ENCODE measurements at regions of chr12 and their contacts with region 1.

Region 1: DNA sequence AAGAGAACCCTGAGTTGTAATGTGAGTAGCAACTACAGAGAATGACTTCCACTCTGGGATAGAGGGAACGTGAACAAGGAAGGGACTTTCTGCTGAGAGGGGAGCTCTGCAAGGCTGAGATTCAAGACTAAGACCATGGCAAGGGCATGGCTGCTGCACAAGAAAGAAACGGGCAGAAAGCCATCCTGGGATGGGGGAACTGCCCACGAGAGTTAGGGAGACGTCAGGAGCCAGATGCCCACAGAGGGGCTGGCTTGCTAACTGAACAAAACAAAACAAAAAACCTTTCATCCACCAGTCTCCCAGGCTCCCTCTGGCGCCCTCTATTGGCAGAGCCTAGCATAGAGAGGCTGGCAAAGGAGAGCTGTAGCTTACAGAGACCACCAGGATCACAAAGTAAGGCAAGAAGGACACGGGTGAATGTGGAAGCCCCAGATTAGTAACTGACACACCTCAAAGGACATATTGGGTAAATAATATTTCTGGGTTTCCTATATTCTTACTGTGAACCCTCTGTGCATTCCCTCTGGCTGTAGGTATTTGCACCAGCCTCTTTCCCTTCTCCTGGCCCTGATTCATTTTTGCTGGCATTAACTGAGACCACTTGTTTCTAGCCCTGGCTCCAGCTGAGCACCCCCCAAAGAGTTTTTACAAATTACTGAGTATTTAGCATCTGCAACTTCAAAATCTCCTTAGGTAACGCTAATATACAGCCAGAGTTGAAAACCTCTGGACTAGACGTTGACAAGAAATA is 338.3 kb downstream of the EMP1 start:
- DNase-seq: peak; percentile 18
- H3K4me3 Mint-ChIP-seq: no peak overlapping the region
- H3K27ac Mint-ChIP-seq: no peak overlapping the region
- H3K4me1 Mint-ChIP-seq: peaks cover 7% of the 10 kb centered on the region
- H3K27me3 Mint-ChIP-seq: peaks cover 24% of the 10 kb centered on the region

Region 2: DNA sequence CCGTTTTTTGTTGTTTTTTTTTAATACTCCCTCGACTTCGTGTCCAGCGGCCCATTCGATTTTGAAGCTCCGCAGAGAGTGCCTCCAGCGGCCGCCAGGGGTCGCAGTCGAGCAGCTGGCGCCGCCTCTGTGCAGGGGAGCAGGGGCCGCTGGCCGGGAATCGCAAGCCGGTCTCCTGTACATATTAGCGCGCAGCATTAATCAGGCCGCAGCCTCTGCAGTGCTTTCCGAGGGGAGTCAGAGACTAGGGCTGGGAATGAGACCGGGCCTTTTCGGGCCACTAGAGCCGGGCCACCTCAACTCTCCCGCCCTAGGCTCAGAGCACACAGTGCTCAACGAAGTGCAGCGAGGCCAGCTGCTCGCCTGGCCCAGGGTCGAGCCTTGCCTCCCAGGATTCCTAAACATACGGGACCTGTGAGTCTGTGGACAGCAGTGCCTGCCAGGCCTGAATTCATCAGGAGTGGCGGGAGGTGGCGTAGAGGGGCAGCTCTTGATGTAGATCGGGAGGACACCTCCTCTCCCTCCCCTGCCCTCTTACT is 256.5 kb before region 1 on chr12:
- intact Hi-C with region 1: loop called (anchors 2 kb)
- DNase-seq: peak; percentile 34
- H3K4me3 Mint-ChIP-seq: no peak overlapping the region
- H3K27ac Mint-ChIP-seq: no peak overlapping the region
- H3K4me1 Mint-ChIP-seq: peaks cover 3% of the 10 kb centered on the region
- H3K27me3 Mint-ChIP-seq: peaks cover 28% of the 10 kb centered on the region

Region 3: GRCh38 chr12:13347241-13348043 is 187.4 kb before region 1 on chr12:
- intact Hi-C with region 1: loop called (anchors 5 kb)
- DNase-seq: no peak
- H3K4me3 Mint-ChIP-seq: no peak overlapping the region
- H3K27ac Mint-ChIP-seq: no peak overlapping the region
- H3K4me1 Mint-ChIP-seq: peaks cover 13% of the 10 kb centered on the region
- H3K27me3 Mint-ChIP-seq: peaks cover 43% of the 10 kb centered on the region

Region 4: DNA sequence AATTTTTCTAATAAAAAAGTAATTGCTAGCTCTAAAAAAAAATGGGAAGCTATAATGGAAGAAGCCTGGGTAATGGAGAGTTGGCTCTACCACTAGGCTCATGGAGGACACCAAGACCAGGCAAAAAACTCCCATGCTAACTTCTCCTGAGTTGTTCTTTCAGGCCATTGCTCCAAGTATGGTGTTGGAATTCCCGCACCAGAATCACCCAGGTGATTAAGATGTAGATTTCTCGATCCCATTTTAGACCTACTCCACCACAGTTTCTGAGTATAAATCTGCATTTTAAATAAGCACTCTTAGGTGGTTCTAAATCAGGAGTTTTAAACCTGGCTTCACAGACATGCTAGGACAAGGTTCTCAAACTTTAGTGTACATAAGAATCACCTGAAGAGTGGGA is 117.3 kb before region 1 on chr12:
- intact Hi-C with region 1: no loop called
- DNase-seq: no peak
- H3K4me3 Mint-ChIP-seq: no peak overlapping the region
- H3K27ac Mint-ChIP-seq: no peak overlapping the region
- H3K4me1 Mint-ChIP-seq: no peaks in the 10 kb centered on the region
- H3K27me3 Mint-ChIP-seq: peaks cover 2% of the 10 kb centered on the region

Region 5: GRCh38 chr12:13472690-13473089 is 62.1 kb before region 1 on chr12:
- intact Hi-C with region 1: loop called (anchors 2 kb)
- DNase-seq: no peak
- H3K4me3 Mint-ChIP-seq: no peak overlapping the region
- H3K27ac Mint-ChIP-seq: no peak overlapping the region
- H3K4me1 Mint-ChIP-seq: peaks cover 11% of the 10 kb centered on the region
- H3K27me3 Mint-ChIP-seq: peaks cover 17% of the 10 kb centered on the region